OCI-LY7 (cell line): ENCODE measurements at regions of chr20 and their contacts with region 1.

Region 1: GRCh38 chr20:61117725-61118124 is 134.3 kb upstream of the CDH4 start:
- DNase-seq: no peak
- H3K4me3 ChIP-seq: no peak overlapping the region
- H3K27ac ChIP-seq: no peak overlapping the region
- H3K4me1 ChIP-seq: no peaks in the 10 kb centered on the region
- CTCF ChIP-seq: no peak

Region 2: GRCh38 chr20:60851826-60852704 is 265.7 kb before region 1 on chr20:
- CTCF ChIA-PET with region 1: no interaction called
- POLR2A ChIA-PET with region 1: no interaction called
- intact Hi-C with region 1: loop called (anchors 10 kb)
- DNase-seq: peak; percentile 19
- H3K4me3 ChIP-seq: no peak overlapping the region
- H3K27ac ChIP-seq: no peak overlapping the region
- H3K4me1 ChIP-seq: no peaks in the 10 kb centered on the region
- CTCF ChIP-seq: peak; percentile 80

Region 3: GRCh38 chr20:61146023-61146422 is 28.3 kb after region 1 on chr20:
- CTCF ChIA-PET with region 1: no interaction called
- POLR2A ChIA-PET with region 1: no interaction called
- intact Hi-C with region 1: no loop called
- DNase-seq: no peak
- H3K4me3 ChIP-seq: no peak overlapping the region
- H3K27ac ChIP-seq: no peak overlapping the region
- H3K4me1 ChIP-seq: no peaks in the 10 kb centered on the region
- CTCF ChIP-seq: no peak